B cell (primary cell): ENCODE measurements at regions of chr11 and their contacts with region 1.

Region 1: GRCh38 chr11:130861902-130862860 is 54.1 kb downstream of the SNX19 start:
- DNase-seq: peak; percentile 90
- ATAC-seq: peak; percentile 90
- H3K4me3 ChIP-seq: no peak overlapping the region
- H3K4me3 Mint-ChIP-seq: no peak overlapping the region
- H3K27ac ChIP-seq: no peak overlapping the region
- H3K27ac Mint-ChIP-seq: no peak overlapping the region
- H3K4me1 ChIP-seq: peaks cover 0 to 4% of the 10 kb centered on the region in 2 donors
- H3K4me1 Mint-ChIP-seq: peaks cover 12% of the 10 kb centered on the region
- H3K27me3 ChIP-seq: no peaks in the 10 kb centered on the region
- H3K27me3 Mint-ChIP-seq: no peaks in the 10 kb centered on the region
- CTCF ChIP-seq: peak; percentile 100

Region 2: DNA sequence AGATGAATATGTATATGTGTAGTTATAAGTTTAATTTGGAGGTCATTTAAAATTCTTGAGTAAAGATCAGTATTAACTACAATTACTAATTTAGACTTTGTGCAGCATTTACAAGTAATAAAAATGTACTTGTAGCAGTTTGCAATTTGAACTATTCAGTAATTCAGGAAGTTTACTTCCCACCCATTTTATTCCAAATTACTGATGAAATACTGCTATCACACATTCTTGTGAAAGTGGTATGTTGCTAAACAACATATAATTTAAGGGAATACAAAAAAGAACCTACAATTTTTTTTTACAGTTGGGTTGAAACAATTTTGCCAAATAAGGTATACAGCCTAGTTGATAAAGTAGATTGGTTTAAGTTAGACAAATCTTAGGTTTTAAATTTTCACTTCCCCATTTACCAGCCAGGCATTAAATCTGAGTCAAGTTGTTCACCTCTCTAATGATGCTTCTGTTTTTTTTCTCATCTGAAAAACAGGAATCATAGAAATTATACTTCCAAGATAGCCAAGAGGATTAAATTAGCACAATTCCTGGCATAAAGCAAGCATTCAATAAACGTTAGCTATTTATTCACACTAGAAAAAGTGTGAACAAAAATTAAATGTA is 592.7 kb before region 1 on chr11:
- CTCF ChIA-PET with region 1: interaction called, 4 read pairs
- POLR2A ChIA-PET with region 1: interaction called, 13 read pairs
- intact Hi-C with region 1: no loop called
- DNase-seq: peak; percentile 59
- ATAC-seq: peak; percentile 81
- H3K4me3 ChIP-seq: no peak overlapping the region
- H3K4me3 Mint-ChIP-seq: no peak overlapping the region
- H3K27ac ChIP-seq: peak overlapping the region in 1 of 2 donors; percentile 47
- H3K27ac Mint-ChIP-seq: no peak overlapping the region
- H3K4me1 ChIP-seq: peaks cover 6 to 15% of the 10 kb centered on the region in 2 donors
- H3K4me1 Mint-ChIP-seq: peaks cover 35% of the 10 kb centered on the region
- H3K27me3 ChIP-seq: no peaks in the 10 kb centered on the region
- H3K27me3 Mint-ChIP-seq: no peaks in the 10 kb centered on the region
- CTCF ChIP-seq: no peak

Region 3: DNA sequence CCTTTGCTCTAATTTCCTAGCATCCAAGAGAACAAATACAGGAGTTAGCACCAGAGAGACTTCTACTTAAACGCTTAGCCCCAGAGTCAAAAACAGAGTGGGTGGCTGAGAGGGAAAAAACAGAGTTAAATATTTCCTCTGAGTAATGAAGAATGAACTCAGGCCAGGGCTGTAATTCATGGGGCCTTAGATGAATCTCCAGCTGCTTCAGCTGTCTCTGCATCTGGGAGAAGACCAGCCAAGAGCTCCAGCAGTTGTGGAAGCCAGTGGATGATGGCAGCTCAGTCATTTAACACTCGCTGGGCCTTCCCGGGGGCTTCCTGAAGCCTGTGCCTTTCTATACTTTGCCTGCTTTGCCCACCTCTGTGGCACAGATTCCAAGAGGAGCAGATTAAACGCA is 419.4 kb before region 1 on chr11:
- CTCF ChIA-PET with region 1: interaction called, 95 read pairs
- POLR2A ChIA-PET with region 1: no interaction called
- intact Hi-C with region 1: no loop called
- DNase-seq: no peak
- ATAC-seq: no peak
- H3K4me3 ChIP-seq: no peak overlapping the region
- H3K4me3 Mint-ChIP-seq: no peak overlapping the region
- H3K27ac ChIP-seq: no peak overlapping the region
- H3K27ac Mint-ChIP-seq: no peak overlapping the region
- H3K4me1 ChIP-seq: peaks cover 4% of the 10 kb centered on the region in 2 donors
- H3K4me1 Mint-ChIP-seq: peaks cover 2% of the 10 kb centered on the region
- H3K27me3 ChIP-seq: peaks cover 0 to 14% (median 0%) of the 10 kb centered on the region in 4 experiments
- H3K27me3 Mint-ChIP-seq: peaks cover 59% of the 10 kb centered on the region
- CTCF ChIP-seq: no peak

Region 4: GRCh38 chr11:130894322-130895025 is 32.3 kb after region 1 on chr11:
- CTCF ChIA-PET with region 1: interaction called, 15 read pairs
- POLR2A ChIA-PET with region 1: no interaction called
- intact Hi-C with region 1: no loop called
- DNase-seq: peak; percentile 70
- ATAC-seq: peak; percentile 72
- H3K4me3 ChIP-seq: no peak overlapping the region
- H3K4me3 Mint-ChIP-seq: no peak overlapping the region
- H3K27ac ChIP-seq: no peak overlapping the region
- H3K27ac Mint-ChIP-seq: no peak overlapping the region
- H3K4me1 ChIP-seq: no peaks in the 10 kb centered on the region
- H3K4me1 Mint-ChIP-seq: no peaks in the 10 kb centered on the region
- H3K27me3 ChIP-seq: no peaks in the 10 kb centered on the region
- H3K27me3 Mint-ChIP-seq: no peaks in the 10 kb centered on the region
- CTCF ChIP-seq: peak; percentile 95

Region 5: GRCh38 chr11:131064373-131064991 is 202.3 kb after region 1 on chr11:
- CTCF ChIA-PET with region 1: no interaction called
- POLR2A ChIA-PET with region 1: no interaction called
- intact Hi-C with region 1: no loop called
- DNase-seq: peak; percentile 9
- ATAC-seq: no peak
- H3K4me3 ChIP-seq: no peak overlapping the region
- H3K4me3 Mint-ChIP-seq: no peak overlapping the region
- H3K27ac ChIP-seq: no peak overlapping the region
- H3K27ac Mint-ChIP-seq: no peak overlapping the region
- H3K4me1 ChIP-seq: no peaks in the 10 kb centered on the region
- H3K4me1 Mint-ChIP-seq: no peaks in the 10 kb centered on the region
- H3K27me3 ChIP-seq: peaks cover 0 to 3% (median 0%) of the 10 kb centered on the region in 4 experiments
- H3K27me3 Mint-ChIP-seq: peaks cover 14% of the 10 kb centered on the region
- CTCF ChIP-seq: peak; percentile 50